ENCODE measurements at regions of chr17 and their contacts with region 1.

Region 1: GRCh38 chr17:59619293-59620063 is at the start of gene CLTC:
- DNase-seq: peak; percentile 97
- ATAC-seq: peak; percentile 85
- H3K4me3 Mint-ChIP-seq: peak within 1 kb of the TSS; percentile 89
- H3K27ac Mint-ChIP-seq: peak within 1 kb of the TSS; percentile 98
- H3K4me1 Mint-ChIP-seq: peaks cover 49% of the 10 kb centered on the region
- H3K27me3 Mint-ChIP-seq: no peaks in the 10 kb centered on the region
- total RNA-seq, gene CLTC: 180 to 186 TPM

Region 2: GRCh38 chr17:59155439-59156182 is 463.9 kb before region 1 on chr17 and contains the start of gene PRR11:
- CTCF ChIA-PET with region 1: no interaction called
- POLR2A ChIA-PET with region 1: interaction called, 6 read pairs
- intact Hi-C with region 1: loop called in 1 of 2 experiments (anchors 1 kb)
- DNase-seq: peak; percentile 96
- ATAC-seq: peak; percentile 89
- H3K4me3 Mint-ChIP-seq: no peak within 1 kb of the TSS
- H3K27ac Mint-ChIP-seq: no peak within 1 kb of the TSS
- H3K4me1 Mint-ChIP-seq: peaks cover 37% of the 10 kb centered on the region
- H3K27me3 Mint-ChIP-seq: no peaks in the 10 kb centered on the region
- total RNA-seq, gene PRR11: 73.6 to 95.9 TPM

Region 3: DNA sequence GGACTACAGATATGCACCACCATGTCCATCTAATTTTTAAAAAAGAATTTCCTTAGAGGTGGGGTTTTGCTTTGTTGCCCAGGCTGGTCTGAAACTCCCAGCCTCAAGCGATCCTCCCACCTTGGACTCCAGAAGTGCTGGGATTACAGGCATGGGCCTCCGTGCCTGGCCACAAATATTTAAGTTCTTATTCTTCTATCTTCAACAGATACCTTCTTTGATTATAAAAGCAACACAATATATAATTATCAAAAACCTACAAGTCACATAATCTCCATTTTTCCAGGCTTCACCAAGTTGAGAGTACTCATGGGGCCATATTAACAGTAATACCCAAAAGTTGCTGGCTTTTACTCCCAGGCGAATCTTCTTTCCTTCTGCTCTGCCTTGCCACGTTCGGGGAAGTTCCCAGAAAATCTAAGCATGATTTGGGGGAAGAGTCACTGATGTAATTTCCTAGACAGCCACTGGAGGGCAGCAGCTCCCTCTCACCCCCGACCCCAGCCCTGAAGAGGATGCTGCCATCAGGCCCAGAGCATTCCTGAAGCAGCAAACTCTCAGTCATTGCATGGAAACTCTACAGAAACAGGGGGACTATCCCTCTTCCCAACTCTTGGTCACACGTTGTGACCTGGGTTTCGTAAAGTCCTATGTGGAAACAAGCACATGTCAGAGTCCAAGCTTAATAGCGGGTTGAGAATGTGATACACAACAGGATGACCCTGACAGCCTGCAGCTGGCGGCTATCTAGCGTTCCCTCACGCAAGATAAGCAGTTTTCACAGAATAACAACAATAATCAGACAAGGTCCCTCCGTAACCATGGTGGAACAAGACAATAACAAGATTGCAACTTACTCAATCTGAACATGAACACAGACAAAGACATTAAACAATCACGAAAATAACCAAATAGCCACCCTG is 98.0 kb before region 1 on chr17:
- CTCF ChIA-PET with region 1: interaction called, 3 read pairs
- POLR2A ChIA-PET with region 1: no interaction called
- intact Hi-C with region 1: loop called in 1 of 2 experiments (anchors 5 kb)
- DNase-seq: peak; percentile 80
- ATAC-seq: peak; percentile 85
- H3K4me3 Mint-ChIP-seq: no peak overlapping the region
- H3K27ac Mint-ChIP-seq: no peak overlapping the region
- H3K4me1 Mint-ChIP-seq: peaks cover 4% of the 10 kb centered on the region
- H3K27me3 Mint-ChIP-seq: peaks cover 9% of the 10 kb centered on the region

Region 4: GRCh38 chr17:59634632-59635541 is 15.4 kb after region 1 on chr17:
- CTCF ChIA-PET with region 1: interaction called, 13 read pairs
- POLR2A ChIA-PET with region 1: interaction called, 6 read pairs
- intact Hi-C with region 1: no loop called
- DNase-seq: no peak
- ATAC-seq: peak; percentile 50
- H3K4me3 Mint-ChIP-seq: no peak overlapping the region
- H3K27ac Mint-ChIP-seq: peak overlapping the region; percentile 63
- H3K4me1 Mint-ChIP-seq: peaks cover 72% of the 10 kb centered on the region
- H3K27me3 Mint-ChIP-seq: no peaks in the 10 kb centered on the region

Region 5: GRCh38 chr17:59829217-59830006 is 209.9 kb after region 1 on chr17:
- CTCF ChIA-PET with region 1: interaction called, 3 read pairs
- POLR2A ChIA-PET with region 1: interaction called, 7 read pairs
- intact Hi-C with region 1: loop called in 1 of 2 experiments (anchors 1 kb)
- DNase-seq: peak; percentile 65
- ATAC-seq: peak; percentile 72
- H3K4me3 Mint-ChIP-seq: peak overlapping the region; percentile 78
- H3K27ac Mint-ChIP-seq: peak overlapping the region; percentile 93
- H3K4me1 Mint-ChIP-seq: peaks cover 87% of the 10 kb centered on the region
- H3K27me3 Mint-ChIP-seq: no peaks in the 10 kb centered on the region

Region 6: DNA sequence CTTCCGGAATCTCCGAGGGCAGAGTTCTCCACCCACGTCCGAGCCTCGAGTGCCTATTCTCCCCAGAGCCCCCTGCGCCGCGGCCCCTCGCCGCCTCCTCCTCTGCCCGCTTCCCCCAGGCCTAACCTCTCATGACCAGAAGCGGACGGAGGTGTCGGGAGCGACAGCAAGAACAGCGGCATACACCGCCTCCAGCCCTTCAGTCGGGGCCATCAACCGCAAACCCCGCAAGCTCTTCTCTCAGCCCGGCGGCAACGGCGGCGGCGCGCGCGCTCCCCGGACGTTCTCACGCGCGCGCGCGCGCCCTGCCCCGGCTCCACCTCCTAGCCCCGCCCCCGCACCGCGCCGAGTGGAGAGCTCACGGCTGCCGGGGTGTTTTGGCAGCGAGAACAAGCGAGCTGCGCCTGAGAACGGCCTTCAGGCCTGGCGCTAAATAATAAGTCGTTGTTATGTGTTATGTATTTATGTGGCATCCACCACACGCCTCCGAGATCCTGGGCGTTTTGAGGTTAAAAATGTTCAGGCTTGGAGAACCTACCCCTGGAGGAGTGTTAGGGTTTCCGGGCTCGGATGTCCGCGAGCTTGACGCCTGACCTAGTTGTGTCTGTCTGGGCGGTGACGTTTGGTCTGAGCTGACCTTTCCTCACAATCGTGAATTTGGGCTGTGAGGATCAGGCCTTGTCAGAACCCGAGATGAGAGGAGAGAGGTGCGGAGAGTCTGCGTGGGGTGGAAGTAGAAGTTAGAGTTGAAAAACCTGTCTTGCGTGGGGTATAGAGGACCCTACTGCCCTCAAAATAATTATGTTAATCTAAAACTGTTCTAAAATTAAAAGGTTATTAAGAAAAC is 345.2 kb after region 1 on chr17 and contains the start of gene RNFT1:
- CTCF ChIA-PET with region 1: no interaction called
- POLR2A ChIA-PET with region 1: no interaction called
- intact Hi-C with region 1: loop called in 1 of 2 experiments (anchors 1 kb)
- DNase-seq: peak; percentile 97
- ATAC-seq: peak; percentile 84
- H3K4me3 Mint-ChIP-seq: peak within 1 kb of the TSS; percentile 78
- H3K27ac Mint-ChIP-seq: peak within 1 kb of the TSS; percentile 96
- H3K4me1 Mint-ChIP-seq: peaks cover 19% of the 10 kb centered on the region
- H3K27me3 Mint-ChIP-seq: no peaks in the 10 kb centered on the region
- total RNA-seq, gene RNFT1: 32.8 to 36.9 TPM